ENCODE measurements at regions of chr5 and their contacts with region 1.

Region 1: GRCh38 chr5:76199336-76200318 is 116.4 kb downstream of the SV2C start:
- DNase-seq: no peak
- H3K4me3 ChIP-seq: no peak overlapping the region
- H3K27ac ChIP-seq: no peak overlapping the region
- H3K4me1 ChIP-seq: no peaks in the 10 kb centered on the region
- H3K27me3 ChIP-seq: no peaks in the 10 kb centered on the region
- CTCF ChIP-seq: no peak
- POLR2A ChIP-seq: no peak

Region 2: DNA sequence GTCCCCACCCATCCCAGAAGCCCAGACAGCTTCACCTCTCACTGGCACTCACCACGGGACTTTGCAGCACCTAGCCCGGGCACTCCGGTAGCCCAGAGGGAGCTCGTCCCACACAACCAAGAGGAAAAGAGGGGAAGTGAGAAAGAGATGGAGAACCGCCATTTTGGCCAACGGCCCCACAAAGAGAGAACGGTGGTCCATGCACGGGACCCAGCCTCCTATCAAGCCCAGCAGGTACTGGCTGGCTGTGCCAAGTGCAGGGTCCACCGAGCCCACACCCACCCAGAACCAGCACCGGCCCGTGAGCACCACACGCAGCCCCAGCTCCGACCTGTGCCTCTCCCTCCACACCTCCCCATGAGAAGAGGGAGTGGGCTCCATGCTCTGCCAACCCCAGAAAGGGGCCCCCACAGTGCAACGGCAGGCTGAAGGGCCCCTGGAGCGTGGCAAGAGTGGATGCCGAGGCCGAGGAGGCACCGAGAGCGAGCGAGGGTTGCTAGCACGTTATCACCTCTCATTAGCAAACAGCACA is 1068.7 kb before region 1 on chr5:
- intact Hi-C with region 1: no loop called
- DNase-seq: no peak
- H3K4me3 ChIP-seq: no peak overlapping the region
- H3K27ac ChIP-seq: no peak overlapping the region
- H3K4me1 ChIP-seq: no peaks in the 10 kb centered on the region
- H3K27me3 ChIP-seq: no peaks in the 10 kb centered on the region
- CTCF ChIP-seq: no peak
- POLR2A ChIP-seq: no peak

Region 3: GRCh38 chr5:78178356-78178755 is 1978.7 kb after region 1 on chr5:
- intact Hi-C with region 1: loop called (anchors 10 kb)
- DNase-seq: no peak
- H3K4me3 ChIP-seq: no peak overlapping the region
- H3K27ac ChIP-seq: no peak overlapping the region
- H3K4me1 ChIP-seq: no peaks in the 10 kb centered on the region
- H3K27me3 ChIP-seq: no peaks in the 10 kb centered on the region
- CTCF ChIP-seq: no peak
- POLR2A ChIP-seq: no peak

Measured in breast epithelium (tissue), 4 donors.